ENCODE measurements at regions of chr5 and their contacts with region 1.

Region 1: GRCh38 chr5:72723581-72723980 is 92.9 kb upstream of the TNPO1 start:
- DNase-seq: no peak
- H3K4me3 ChIP-seq: no peak overlapping the region
- H3K27ac ChIP-seq: no peak overlapping the region
- H3K4me1 ChIP-seq: no peaks in the 10 kb centered on the region
- H3K27me3 ChIP-seq: peaks cover 3 to 4% of the 10 kb centered on the region in 2 experiments
- CTCF ChIP-seq: no peak
- POLR2A ChIP-seq: no peak

Region 2: DNA sequence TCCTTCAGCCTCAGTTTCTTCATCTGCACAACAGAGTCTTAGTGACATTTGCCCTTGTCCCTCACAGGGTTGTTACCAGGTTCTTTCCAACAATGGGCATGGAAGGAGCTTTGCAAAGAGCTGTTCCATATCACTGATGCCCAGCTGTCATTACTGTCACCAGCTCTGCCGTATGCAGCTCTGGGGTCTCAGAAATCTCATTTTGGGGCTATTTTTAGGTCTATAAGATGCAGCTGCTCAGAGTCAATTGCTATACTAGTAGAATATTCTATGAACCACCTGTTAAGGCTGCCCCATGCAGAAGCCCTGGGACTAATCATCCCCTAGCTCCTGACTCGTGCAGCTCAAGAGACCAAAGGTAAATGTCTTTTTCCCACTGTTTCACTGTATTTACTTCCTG is 12.2 kb before region 1 on chr5:
- CTCF ChIA-PET with region 1: interaction called, 12 read pairs
- POLR2A ChIA-PET with region 1: no interaction called
- dilution Hi-C with region 1: no loop called
- intact Hi-C with region 1: no loop called
- DNase-seq: no peak
- H3K4me3 ChIP-seq: no peak overlapping the region
- H3K27ac ChIP-seq: no peak overlapping the region
- H3K4me1 ChIP-seq: no peaks in the 10 kb centered on the region
- H3K27me3 ChIP-seq: peaks cover 4 to 9% of the 10 kb centered on the region in 2 experiments
- CTCF ChIP-seq: no peak
- POLR2A ChIP-seq: no peak